ENCODE measurements at regions of chr6 and their contacts with region 1.

Region 1: DNA sequence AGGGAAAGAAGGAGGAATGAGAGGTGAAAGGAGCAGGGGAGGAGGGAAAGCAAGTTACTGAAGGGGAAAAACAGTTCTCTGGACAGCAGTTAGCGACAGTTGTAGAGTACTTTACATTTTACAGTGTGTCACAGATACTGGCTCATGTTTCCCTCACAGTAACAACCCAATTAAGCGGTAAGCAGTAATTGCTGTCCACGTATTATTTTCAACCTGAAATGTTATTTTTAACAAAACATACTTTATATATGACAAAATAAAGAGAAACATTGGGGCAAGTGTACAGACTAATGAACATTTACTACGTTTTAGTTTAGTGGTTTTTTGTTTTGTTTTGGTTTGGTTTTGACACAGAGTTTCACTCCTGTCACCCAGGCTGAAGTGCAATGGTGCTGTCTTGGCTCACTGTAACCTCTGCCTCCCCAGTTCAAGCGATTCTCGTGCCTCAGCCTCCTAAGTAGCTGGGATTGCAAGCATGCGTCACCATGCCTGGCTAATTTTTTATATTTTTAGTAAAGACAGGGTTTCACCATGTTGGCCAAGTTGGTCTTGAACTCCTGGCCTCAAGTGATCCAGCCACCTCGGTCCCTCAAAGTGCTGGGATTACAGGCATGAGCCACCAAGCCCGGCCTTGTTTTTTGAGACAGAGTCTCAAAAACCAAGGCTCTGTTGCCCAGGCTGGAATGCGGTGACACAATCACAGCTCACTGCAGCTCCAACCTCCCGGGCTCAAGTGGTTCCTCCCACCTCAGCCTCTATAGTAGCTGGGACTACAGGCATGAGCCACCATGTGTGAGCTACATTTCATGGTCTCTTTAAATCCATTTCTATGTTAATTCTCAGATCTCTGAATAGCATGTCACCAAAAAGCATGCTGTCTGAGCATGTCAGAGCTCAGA is 22.6 kb upstream of the BTN3A2 start:
- DNase-seq: no peak
- ATAC-seq: peak in 1 of 8 donors; percentile 35
- H3K4me3 ChIP-seq: peak overlapping the region in 2 of 10 donors; percentile 1 to 12
- H3K27ac ChIP-seq: no peak overlapping the region
- H3K4me1 ChIP-seq: peaks cover 0 to 9% (median 0%) of the 10 kb centered on the region in 9 donors
- H3K27me3 ChIP-seq: peaks cover 0 to 52% (median 26%) of the 10 kb centered on the region in 7 donors
- CTCF ChIP-seq: no peak

Region 2: DNA sequence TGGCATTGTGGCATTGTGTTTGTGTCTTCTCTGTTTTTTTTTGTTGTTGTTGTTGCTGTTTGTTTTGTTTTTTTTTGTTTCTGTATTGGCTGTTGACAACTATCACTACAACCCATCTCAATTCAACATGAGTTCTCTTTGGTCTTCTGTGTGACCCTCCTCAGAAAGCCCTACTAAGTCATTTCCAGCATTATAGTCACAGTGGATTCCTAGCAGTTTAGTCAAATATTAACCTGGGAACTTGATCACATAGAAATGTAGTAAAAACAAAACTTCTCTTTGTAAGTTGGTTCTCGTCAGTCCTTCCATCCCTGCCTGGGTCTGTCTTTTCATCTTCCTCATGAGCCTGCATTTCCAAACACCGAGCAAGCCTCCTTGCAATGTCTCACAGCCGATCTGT is 428.6 kb before region 1 on chr6:
- intact Hi-C with region 1: no loop called
- DNase-seq: no peak
- ATAC-seq: no peak
- H3K4me3 ChIP-seq: no peak overlapping the region
- H3K27ac ChIP-seq: no peak overlapping the region
- H3K4me1 ChIP-seq: no peaks in the 10 kb centered on the region
- H3K27me3 ChIP-seq: peaks cover 0 to 7% (median 0%) of the 10 kb centered on the region in 7 donors
- CTCF ChIP-seq: no peak

Region 3: DNA sequence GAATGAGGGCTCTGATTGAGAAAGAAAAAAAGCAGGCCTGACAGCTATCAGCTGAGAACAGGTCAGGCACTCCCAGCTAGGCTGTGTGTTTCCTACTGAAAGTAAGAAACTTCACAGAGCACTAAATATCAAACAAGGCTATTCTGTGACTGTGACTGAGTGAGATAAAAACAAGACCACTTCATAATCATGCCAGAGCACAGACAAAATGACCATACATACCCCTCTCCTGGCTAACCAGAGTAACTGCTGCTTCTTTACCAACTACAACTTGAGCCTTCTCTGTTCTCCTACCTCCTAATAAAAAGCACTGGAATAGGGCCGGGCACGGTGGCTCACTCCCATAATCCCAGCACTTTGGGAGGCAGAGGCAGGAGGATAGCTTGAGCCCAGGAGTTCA is 150.9 kb after region 1 on chr6:
- intact Hi-C with region 1: loop called in 1 of 10 experiments (anchors 10 kb)
- DNase-seq: no peak
- ATAC-seq: no peak
- H3K4me3 ChIP-seq: no peak overlapping the region
- H3K27ac ChIP-seq: no peak overlapping the region
- H3K4me1 ChIP-seq: no peaks in the 10 kb centered on the region
- H3K27me3 ChIP-seq: peaks cover 0 to 3% (median 0%) of the 10 kb centered on the region in 7 donors
- CTCF ChIP-seq: peak in 3 of 9 donors; percentile 7 to 26 (median 16)

Region 4: GRCh38 chr6:26520853-26521599 is 178.7 kb after region 1 on chr6:
- intact Hi-C with region 1: loop called in 1 of 10 experiments (anchors 10 kb)
- DNase-seq: peak; percentile 89 to 90
- ATAC-seq: peak; percentile 85 to 97 (median 92)
- H3K4me3 ChIP-seq: peak overlapping the region; percentile 28 to 70 (median 58)
- H3K27ac ChIP-seq: peak overlapping the region; percentile 86 to 99 (median 95)
- H3K4me1 ChIP-seq: peaks cover 0 to 39% (median 12%) of the 10 kb centered on the region in 9 donors
- H3K27me3 ChIP-seq: no peaks in the 10 kb centered on the region
- CTCF ChIP-seq: no peak

Region 5: GRCh38 chr6:26568601-26569432 is 226.5 kb after region 1 on chr6:
- intact Hi-C with region 1: loop called in 1 of 10 experiments (anchors 5 kb)
- DNase-seq: peak; percentile 90 to 96
- ATAC-seq: peak; percentile 81 to 90 (median 85)
- H3K4me3 ChIP-seq: peak overlapping the region; percentile 16 to 59 (median 50)
- H3K27ac ChIP-seq: peak overlapping the region in 4 of 10 donors; percentile 2 to 63 (median 50)
- H3K4me1 ChIP-seq: peaks cover 0 to 27% (median 4%) of the 10 kb centered on the region in 9 donors
- H3K27me3 ChIP-seq: no peaks in the 10 kb centered on the region
- CTCF ChIP-seq: peak in 4 of 9 donors; percentile 25 to 36 (median 32)

Region 6: GRCh38 chr6:26576929-26577719 is 234.8 kb after region 1 on chr6:
- intact Hi-C with region 1: loop called in 2 of 10 experiments (anchors 5 kb)
- DNase-seq: peak; percentile 37 to 46
- ATAC-seq: peak in 3 of 8 donors; percentile 50 to 70 (median 56)
- H3K4me3 ChIP-seq: peak overlapping the region in 6 of 10 donors; percentile 4 to 48 (median 28)
- H3K27ac ChIP-seq: peak overlapping the region in 1 of 10 donors; percentile 44
- H3K4me1 ChIP-seq: peaks cover 0 to 22% (median 6%) of the 10 kb centered on the region in 9 donors
- H3K27me3 ChIP-seq: peaks cover 0 to 69% (median 26%) of the 10 kb centered on the region in 7 donors
- CTCF ChIP-seq: no peak

Region 7: DNA sequence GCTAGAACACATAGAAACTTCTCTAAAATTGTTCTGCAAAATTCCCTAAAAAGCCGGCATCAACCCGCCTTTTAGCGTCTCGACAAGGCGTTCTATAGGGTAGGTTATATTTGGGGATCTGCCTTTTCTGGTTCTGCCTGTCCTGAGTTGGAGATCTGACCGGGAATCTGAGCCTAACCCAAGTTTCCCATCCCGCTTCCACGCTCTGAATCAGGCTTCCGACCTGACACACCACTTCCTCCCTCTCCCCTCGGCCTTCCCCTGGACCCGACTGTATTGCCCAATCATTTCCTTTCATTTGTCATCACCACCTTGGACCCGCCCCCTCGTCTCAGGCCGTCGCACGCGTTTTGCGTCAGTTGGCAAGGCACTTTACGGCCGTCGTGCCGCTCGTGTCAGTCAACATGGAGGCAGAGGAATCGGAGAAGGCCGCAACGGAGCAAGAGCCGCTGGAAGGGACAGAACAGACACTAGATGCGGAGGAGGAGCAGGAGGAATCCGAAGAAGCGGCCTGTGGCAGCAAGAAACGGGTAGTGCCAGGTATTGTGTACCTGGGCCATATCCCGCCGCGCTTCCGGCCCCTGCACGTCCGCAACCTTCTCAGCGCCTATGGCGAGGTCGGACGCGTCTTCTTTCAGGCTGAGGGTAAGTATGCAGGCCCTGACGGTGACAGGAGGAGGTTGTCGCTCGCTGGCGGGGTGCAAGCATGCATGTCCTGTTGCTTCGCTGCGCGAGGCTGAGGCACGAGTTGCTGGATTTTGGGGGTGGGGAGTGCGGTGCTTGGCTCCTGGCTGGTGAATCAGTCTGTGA is 254.4 kb after region 1 on chr6 and contains the start of gene ABT1:
- intact Hi-C with region 1: loop called (anchors 1 to 10 kb)
- DNase-seq: peak; percentile 97 to 99
- ATAC-seq: peak; percentile 98 to 99 (median 99)
- H3K4me3 ChIP-seq: peak within 1 kb of the TSS; percentile 72 to 96 (median 87)
- H3K27ac ChIP-seq: peak within 1 kb of the TSS; percentile 59 to 95 (median 88)
- H3K4me1 ChIP-seq: peaks cover 0 to 39% (median 18%) of the 10 kb centered on the region in 9 donors
- H3K27me3 ChIP-seq: peaks cover 0 to 33% (median 24%) of the 10 kb centered on the region in 7 donors
- CTCF ChIP-seq: no peak
- total RNA-seq, gene ABT1: 5.8 to 10.2 (median 7.4) TPM

Region 8: DNA sequence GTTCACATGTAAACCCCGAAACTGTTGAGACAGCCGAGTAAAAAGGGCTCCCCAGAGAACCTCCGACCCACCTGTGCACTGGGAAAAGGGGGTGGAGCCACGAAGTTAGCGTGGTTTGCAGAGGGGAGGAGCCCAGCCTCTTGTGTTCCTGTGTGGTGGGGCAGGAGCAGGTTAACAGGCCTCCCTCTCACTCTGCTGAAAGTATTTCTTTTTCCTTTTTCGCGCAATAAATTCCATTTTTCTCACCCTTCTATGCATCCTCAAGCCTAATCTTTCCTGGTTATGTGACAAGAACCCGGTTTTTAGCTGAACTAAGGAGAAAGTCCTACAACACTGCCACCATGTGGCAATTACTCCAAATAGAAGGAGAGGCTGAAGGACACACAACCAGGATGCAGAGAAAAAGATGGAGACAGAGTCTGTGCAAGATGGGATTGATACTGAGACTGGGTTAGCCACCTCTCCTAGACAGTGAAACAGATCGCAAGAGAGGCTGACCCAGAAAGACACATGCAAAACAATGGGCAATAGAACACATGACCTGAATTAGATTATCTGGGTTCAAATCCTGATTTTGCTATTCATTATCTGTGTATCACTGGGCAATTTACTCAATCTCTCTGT is 736.5 kb after region 1 on chr6:
- intact Hi-C with region 1: loop called in 4 of 10 experiments (anchors 5 to 10 kb)
- DNase-seq: peak in 1 of 2 donors; percentile 25
- ATAC-seq: peak in 6 of 8 donors; percentile 28 to 76 (median 50)
- H3K4me3 ChIP-seq: peak overlapping the region in 2 of 10 donors; percentile 9 to 16
- H3K27ac ChIP-seq: no peak overlapping the region
- H3K4me1 ChIP-seq: peaks cover 0 to 5% (median 4%) of the 10 kb centered on the region in 9 donors
- H3K27me3 ChIP-seq: peaks cover 0 to 97% (median 51%) of the 10 kb centered on the region in 7 donors
- CTCF ChIP-seq: peak in 8 of 9 donors; percentile 23 to 72 (median 67)

Measured in heart right ventricle (tissue), 16 donors.